ENCODE measurements at regions of chr2 and their contacts with region 1.

Region 1: DNA sequence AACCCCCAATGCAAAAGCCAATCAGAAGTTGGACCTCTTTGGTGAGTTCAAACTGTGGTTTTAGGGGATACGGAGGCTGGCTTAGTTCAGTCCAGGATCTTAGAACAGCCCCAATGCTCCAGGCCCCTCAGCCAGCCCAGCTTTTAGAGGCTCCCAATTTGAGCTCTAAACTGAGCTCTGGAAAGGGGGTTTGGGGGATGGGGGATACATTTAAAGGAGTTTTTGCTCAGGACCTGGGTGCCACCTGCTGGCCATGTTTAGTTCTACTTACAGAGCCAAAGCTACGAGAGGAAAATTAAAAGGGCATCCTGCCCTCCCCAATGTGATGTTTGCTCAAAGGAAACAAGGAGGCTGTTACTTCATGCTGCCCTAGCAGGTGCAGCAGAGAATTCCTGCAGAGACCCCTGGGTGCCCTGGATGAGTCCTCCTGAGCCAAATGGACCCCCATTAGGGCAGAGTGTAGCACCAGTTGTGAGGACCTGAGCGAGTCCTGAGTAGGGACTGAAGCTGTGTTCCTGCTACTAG is 15.9 kb upstream of the TMEM214 start:
- DNase-seq: peak; percentile 73
- H3K4me3 Mint-ChIP-seq: no peak overlapping the region
- H3K27ac Mint-ChIP-seq: no peak overlapping the region
- H3K4me1 Mint-ChIP-seq: peaks cover 9% of the 10 kb centered on the region
- H3K27me3 Mint-ChIP-seq: peaks cover 10% of the 10 kb centered on the region

Region 2: GRCh38 chr2:26970244-26970920 is 46.5 kb before region 1 on chr2 and contains the start of gene MAPRE3:
- CTCF ChIA-PET with region 1: interaction called, 176 read pairs
- DNase-seq: peak; percentile 86
- H3K4me3 Mint-ChIP-seq: peak within 1 kb of the TSS; percentile 66
- H3K27ac Mint-ChIP-seq: no peak within 1 kb of the TSS
- H3K4me1 Mint-ChIP-seq: peaks cover 19% of the 10 kb centered on the region
- H3K27me3 Mint-ChIP-seq: peaks cover 61% of the 10 kb centered on the region

Region 3: DNA sequence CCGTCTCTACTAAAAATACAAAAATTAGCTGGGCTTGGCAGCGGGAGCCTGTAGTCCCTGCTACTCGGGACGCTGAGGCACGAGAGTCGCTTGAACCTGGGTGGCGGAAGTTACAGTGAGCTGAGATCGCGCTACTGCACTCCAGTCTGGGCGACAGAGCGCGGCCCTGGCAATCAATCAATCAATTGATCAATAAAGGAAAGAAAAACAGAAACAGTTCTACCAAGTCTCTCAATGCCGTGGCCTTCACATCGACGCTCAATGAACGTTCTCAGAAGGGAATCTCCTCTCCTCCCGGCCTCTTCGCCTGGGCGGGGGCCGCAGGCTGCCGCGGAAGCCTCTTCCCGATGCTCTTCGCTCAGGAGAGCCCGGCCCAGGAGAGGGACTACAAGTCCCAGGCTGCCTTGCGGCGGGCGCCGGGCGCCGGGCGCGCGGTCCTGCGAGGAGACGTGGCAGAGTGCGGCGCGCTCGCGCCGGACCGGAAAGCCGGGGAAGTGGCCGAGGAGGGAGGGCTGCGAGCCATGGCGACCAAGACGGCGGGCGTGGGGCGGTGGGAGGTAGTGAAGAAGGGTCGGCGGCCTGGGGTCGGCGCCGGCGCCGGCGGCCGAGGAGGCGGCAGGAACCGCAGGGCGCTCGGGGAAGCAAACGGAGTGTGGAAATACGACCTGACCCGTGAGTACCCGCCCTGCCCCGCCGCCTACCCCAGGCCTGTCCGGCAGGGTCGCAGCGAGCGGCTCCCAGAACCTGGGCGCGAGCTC is 15.8 kb after region 1 on chr2 and contains the start of gene TMEM214:
- CTCF ChIA-PET with region 1: interaction called, 17 read pairs
- DNase-seq: peak; percentile 89
- H3K4me3 Mint-ChIP-seq: peak within 1 kb of the TSS; percentile 97
- H3K27ac Mint-ChIP-seq: peak within 1 kb of the TSS; percentile 92
- H3K4me1 Mint-ChIP-seq: peaks cover 56% of the 10 kb centered on the region
- H3K27me3 Mint-ChIP-seq: no peaks in the 10 kb centered on the region

Region 4: DNA sequence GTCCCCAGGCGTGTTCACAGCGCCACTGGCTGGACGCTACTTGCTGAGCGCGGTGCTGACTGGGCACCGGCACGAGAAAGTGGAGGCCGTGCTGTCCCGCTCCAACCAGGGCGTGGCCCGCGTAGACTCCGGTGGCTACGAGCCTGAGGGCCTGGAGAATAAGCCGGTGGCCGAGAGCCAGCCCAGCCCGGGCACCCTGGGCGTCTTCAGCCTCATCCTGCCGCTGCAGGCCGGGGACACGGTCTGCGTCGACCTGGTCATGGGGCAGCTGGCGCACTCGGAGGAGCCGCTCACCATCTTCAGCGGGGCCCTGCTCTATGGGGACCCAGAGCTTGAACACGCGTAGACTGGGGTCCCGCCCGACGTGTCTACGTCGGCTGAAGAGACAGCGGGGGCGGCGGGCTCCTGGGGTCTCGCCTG is 68.8 kb after region 1 on chr2:
- CTCF ChIA-PET with region 1: no interaction called
- DNase-seq: peak; percentile 50
- H3K4me3 Mint-ChIP-seq: peak overlapping the region; percentile 80
- H3K27ac Mint-ChIP-seq: peak overlapping the region; percentile 80
- H3K4me1 Mint-ChIP-seq: peaks cover 66% of the 10 kb centered on the region
- H3K27me3 Mint-ChIP-seq: no peaks in the 10 kb centered on the region

Region 5: DNA sequence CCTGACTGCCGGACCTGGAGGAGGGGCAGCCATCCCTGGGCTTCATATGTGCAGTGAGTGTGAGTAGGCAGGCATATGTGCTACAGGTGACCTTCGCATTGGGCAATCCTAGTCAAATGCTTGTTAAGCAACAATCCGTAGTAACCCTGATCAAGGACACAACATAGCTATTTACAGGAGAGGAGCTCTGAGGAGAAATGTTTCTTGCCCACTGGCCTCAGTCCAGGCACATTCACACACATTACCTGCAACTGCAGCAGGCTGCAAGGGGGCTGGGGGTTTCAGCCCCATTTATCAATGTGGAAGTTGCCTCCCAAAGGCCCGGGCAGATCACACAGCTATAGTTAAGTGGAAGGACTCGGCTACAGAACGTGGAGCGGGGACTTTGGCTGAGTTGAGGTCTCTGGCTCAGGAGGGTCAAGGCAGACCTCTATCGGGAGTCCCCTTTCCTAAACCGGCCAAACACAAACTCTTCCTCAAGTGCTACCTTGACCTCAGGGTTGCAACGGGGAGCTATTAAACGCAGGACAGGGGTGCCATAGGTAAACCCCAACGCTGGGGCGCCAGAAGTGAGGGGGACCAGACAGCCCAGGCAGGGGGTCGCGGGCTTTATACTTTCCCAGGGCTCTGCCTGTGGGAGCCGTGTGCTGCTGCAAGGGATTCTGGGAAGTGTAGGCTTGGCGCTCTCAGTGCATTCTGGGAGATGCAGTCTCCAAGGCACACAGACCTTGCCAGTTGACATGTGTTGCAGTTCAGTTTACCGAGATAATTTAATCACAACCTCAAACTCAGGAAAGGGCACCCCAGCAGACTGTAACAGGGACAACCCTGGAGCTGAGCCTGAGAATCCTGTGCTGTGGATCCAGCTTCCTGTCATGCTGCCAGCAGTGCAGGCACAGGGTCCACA is 79.1 kb after region 1 on chr2:
- CTCF ChIA-PET with region 1: no interaction called
- DNase-seq: peak; percentile 67
- H3K4me3 Mint-ChIP-seq: no peak overlapping the region
- H3K27ac Mint-ChIP-seq: no peak overlapping the region
- H3K4me1 Mint-ChIP-seq: peaks cover 15% of the 10 kb centered on the region
- H3K27me3 Mint-ChIP-seq: no peaks in the 10 kb centered on the region